ENCODE measurements at regions of chr7 and their contacts with region 1.

Region 1: GRCh38 chr7:130069978-130070860 is at the start of gene KLHDC10:
- DNase-seq: peak; percentile 99
- H3K4me3 ChIP-seq: peak within 1 kb of the TSS; percentile 68 to 94 (median 84)
- H3K27ac ChIP-seq: peak within 1 kb of the TSS; percentile 50
- H3K4me1 ChIP-seq: peaks cover 28% of the 10 kb centered on the region
- H3K27me3 ChIP-seq: no peaks in the 10 kb centered on the region
- CTCF ChIP-seq: no peak
- POLR2A ChIP-seq: peak; percentile 76
- total RNA-seq, gene KLHDC10: 28.6 and 31.3 TPM in 2 replicates

Region 2: DNA sequence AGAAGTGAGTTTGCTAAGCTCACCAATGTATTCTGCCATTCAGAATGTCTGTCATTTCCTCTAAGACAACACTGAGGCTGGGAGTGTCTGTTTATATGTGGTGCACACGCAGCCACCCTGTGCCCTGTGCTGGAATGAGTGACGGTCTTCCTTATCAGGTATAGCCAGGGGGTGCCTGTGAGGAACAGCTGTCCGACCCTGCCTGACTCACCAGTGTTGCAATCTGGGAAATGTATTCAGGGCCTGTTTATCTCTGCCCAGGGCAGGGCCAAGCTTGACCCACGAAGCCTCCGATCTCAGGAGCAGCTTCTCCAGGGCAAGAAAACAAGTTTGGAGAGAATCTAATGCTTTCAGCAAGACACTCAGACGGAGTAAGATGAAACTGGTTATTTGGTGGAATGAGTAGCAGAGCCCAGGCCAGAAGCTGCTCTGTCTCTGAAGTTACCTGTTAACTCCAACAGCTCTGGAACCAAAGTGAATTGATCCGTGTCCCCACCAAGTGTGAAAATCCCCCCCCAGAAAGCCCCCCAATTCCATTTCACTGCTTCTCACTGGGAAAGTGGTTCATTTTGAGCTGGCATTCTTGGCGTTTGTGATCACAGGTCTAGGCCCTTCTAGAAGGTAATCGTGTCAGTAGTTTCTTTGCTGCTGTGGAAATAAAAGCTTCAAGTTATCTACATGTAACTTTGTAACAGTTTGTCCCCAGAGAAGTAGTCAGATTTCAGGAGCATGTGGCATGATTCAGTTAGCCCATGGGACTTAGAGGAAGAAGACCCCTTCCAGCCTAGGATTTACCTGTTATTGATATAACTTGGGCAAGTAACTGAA is 111.4 kb before region 1 on chr7:
- CTCF ChIA-PET with region 1: no interaction called
- POLR2A ChIA-PET with region 1: no interaction called
- dilution Hi-C with region 1: no loop called
- intact Hi-C with region 1: no loop called
- DNase-seq: peak; percentile 98
- H3K4me3 ChIP-seq: no peak overlapping the region
- H3K27ac ChIP-seq: peak overlapping the region; percentile 88
- H3K4me1 ChIP-seq: peaks cover 17% of the 10 kb centered on the region
- H3K27me3 ChIP-seq: no peaks in the 10 kb centered on the region
- CTCF ChIP-seq: no peak
- POLR2A ChIP-seq: peak; percentile 61

Region 3: GRCh38 chr7:130096243-130096827 is 26.1 kb after region 1 on chr7:
- CTCF ChIA-PET with region 1: interaction called, 12 read pairs
- POLR2A ChIA-PET with region 1: no interaction called
- dilution Hi-C with region 1: no loop called
- intact Hi-C with region 1: no loop called
- DNase-seq: no peak
- H3K4me3 ChIP-seq: no peak overlapping the region
- H3K27ac ChIP-seq: no peak overlapping the region
- H3K4me1 ChIP-seq: no peaks in the 10 kb centered on the region
- H3K27me3 ChIP-seq: no peaks in the 10 kb centered on the region
- CTCF ChIP-seq: no peak
- POLR2A ChIP-seq: no peak

Region 4: DNA sequence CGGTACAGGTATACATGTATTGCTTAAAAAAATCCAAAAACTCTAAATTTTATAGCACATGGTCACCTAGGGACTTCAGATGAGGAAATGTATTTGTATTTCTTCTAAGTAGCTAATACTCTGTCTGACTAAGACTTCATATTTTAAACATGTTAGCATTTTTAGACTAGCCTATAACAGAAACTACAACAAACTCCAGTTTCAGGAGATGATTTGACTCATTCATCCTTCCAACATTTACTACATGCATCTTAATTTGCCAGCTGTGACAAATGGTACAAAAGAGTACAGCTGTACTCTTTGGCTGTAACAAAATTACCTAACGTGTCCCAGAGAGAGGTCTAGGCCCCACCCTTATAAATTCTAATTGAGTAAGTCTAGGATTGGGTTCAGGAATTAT is 112.8 kb after region 1 on chr7:
- CTCF ChIA-PET with region 1: interaction called, 13 read pairs
- POLR2A ChIA-PET with region 1: no interaction called
- dilution Hi-C with region 1: no loop called
- intact Hi-C with region 1: no loop called
- DNase-seq: no peak
- H3K4me3 ChIP-seq: no peak overlapping the region
- H3K27ac ChIP-seq: no peak overlapping the region
- H3K4me1 ChIP-seq: peaks cover 10% of the 10 kb centered on the region
- H3K27me3 ChIP-seq: no peaks in the 10 kb centered on the region
- CTCF ChIP-seq: no peak
- POLR2A ChIP-seq: no peak

Region 5: GRCh38 chr7:130440527-130441365 is 370.5 kb after region 1 on chr7 and contains the start of gene CEP41:
- CTCF ChIA-PET with region 1: no interaction called
- POLR2A ChIA-PET with region 1: no interaction called
- dilution Hi-C with region 1: no loop called
- intact Hi-C with region 1: loop called (anchors 5 kb)
- DNase-seq: peak; percentile 99
- H3K4me3 ChIP-seq: peak within 1 kb of the TSS; percentile 61 to 79 (median 63)
- H3K27ac ChIP-seq: peak within 1 kb of the TSS; percentile 87
- H3K4me1 ChIP-seq: peaks cover 12% of the 10 kb centered on the region
- H3K27me3 ChIP-seq: no peaks in the 10 kb centered on the region
- CTCF ChIP-seq: no peak
- POLR2A ChIP-seq: peak; percentile 35
- total RNA-seq, gene CEP41: 25.9 and 26.8 TPM in 2 replicates

Region 6: GRCh38 chr7:130521258-130521951 is 451.2 kb after region 1 on chr7:
- CTCF ChIA-PET with region 1: no interaction called
- POLR2A ChIA-PET with region 1: no interaction called
- dilution Hi-C with region 1: no loop called
- intact Hi-C with region 1: no loop called
- DNase-seq: peak; percentile 45
- H3K4me3 ChIP-seq: no peak overlapping the region
- H3K27ac ChIP-seq: no peak overlapping the region
- H3K4me1 ChIP-seq: no peaks in the 10 kb centered on the region
- H3K27me3 ChIP-seq: no peaks in the 10 kb centered on the region
- CTCF ChIP-seq: no peak
- POLR2A ChIP-seq: no peak

Region 7: GRCh38 chr7:130560970-130561369 is 490.8 kb after region 1 on chr7:
- CTCF ChIA-PET with region 1: no interaction called
- POLR2A ChIA-PET with region 1: no interaction called
- dilution Hi-C with region 1: no loop called
- intact Hi-C with region 1: loop called (anchors 2 kb)
- DNase-seq: peak; percentile 48
- H3K4me3 ChIP-seq: no peak overlapping the region
- H3K27ac ChIP-seq: no peak overlapping the region
- H3K4me1 ChIP-seq: no peaks in the 10 kb centered on the region
- H3K27me3 ChIP-seq: no peaks in the 10 kb centered on the region
- CTCF ChIP-seq: no peak
- POLR2A ChIP-seq: no peak

Region 8: DNA sequence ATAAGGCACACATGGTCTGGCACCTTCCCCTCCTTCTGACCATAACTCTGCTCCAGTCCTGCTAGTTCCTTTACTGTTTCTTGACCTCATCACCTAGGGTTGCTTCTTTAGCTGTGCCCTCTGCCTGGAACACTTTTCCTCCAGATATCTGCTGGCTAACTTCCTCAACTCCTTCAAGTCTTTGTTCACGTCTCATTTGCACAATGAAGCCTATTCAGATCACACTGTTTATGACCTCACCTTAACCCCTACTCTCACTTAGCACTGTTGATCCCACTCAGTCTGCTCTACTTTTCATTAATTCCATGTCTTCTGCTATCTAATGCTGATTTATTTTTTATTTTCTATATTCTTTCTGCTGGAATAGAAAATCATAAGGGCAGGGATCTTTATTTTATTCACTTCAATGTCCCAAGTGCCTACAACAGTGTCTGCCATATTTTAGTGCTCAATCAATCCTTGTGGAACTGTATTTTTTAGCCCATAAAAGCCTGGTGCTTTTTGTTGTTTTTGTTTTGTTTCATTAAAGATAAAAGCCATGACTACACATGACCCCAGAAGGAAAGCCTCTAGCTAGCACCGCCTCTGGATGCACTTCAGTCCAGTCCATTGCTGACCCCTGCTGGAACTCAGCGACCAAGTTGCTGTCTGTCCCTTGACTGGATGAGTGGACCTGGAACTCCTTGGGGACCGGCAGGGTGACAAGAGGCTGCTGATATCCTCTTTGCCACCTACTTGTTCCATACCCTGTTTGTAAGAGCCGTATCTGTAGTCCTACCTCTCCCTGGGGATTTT is 651.5 kb after region 1 on chr7:
- CTCF ChIA-PET with region 1: interaction called, 16 read pairs
- POLR2A ChIA-PET with region 1: no interaction called
- dilution Hi-C with region 1: no loop called
- intact Hi-C with region 1: loop called (anchors 1 kb)
- DNase-seq: peak; percentile 71
- H3K4me3 ChIP-seq: no peak overlapping the region
- H3K27ac ChIP-seq: no peak overlapping the region
- H3K4me1 ChIP-seq: no peaks in the 10 kb centered on the region
- H3K27me3 ChIP-seq: peaks cover 21 to 28% of the 10 kb centered on the region in 2 experiments
- CTCF ChIP-seq: peak; percentile 55 to 67
- POLR2A ChIP-seq: no peak

Region 9: GRCh38 chr7:130831817-130832481 is 761.7 kb after region 1 on chr7:
- CTCF ChIA-PET with region 1: interaction called, 11 read pairs
- POLR2A ChIA-PET with region 1: no interaction called
- dilution Hi-C with region 1: no loop called
- intact Hi-C with region 1: loop called (anchors 1 kb)
- DNase-seq: peak; percentile 35
- H3K4me3 ChIP-seq: no peak overlapping the region
- H3K27ac ChIP-seq: no peak overlapping the region
- H3K4me1 ChIP-seq: peaks cover 10% of the 10 kb centered on the region
- H3K27me3 ChIP-seq: no peaks in the 10 kb centered on the region
- CTCF ChIP-seq: peak; percentile 46 to 52
- POLR2A ChIP-seq: no peak